ENCODE measurements at regions of chr2 and their contacts with region 1.

Region 1: DNA sequence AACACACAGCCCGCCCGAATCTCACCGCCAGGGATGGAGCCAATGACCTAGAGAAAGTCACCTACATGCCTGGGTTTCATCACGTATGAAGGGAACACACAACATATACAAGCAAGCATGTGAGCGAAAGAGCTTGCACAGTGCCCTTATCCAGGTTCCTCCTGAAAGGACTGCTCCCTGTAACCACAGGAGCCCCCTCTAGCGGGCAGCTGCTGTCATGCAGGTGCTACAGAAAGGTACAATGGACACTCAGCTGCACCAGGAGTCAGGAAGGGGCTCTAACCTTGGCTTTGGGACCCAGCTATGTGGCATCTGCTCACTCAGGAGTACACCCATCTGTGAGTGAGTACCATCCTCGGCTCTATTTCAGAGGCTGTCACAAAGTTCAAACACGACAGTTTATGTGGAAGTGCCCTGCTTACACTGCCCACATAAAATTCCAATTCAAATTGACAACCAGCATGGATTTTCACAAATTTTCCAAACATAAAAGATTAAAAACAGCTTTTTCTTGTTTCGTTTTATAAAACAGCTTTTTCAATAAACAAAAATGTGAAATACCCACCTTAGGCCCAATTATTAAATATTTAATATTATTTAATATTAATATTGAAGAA is 3.5 kb downstream of the NDUFA10 start:
- DNase-seq: peak; percentile 85
- H3K4me3 ChIP-seq: no peak overlapping the region; a peak in 1 of 4 replicates
- H3K27ac ChIP-seq: no peak overlapping the region
- H3K4me1 ChIP-seq: peaks cover 6 to 10% of the 10 kb centered on the region in 2 experiments; a peak in 3 of 4 replicates
- H3K27me3 ChIP-seq: no peaks in the 10 kb centered on the region
- CTCF ChIP-seq: peak; percentile 83
- EP300 ChIP-seq: no peak
- RAD21 ChIP-seq: peak; percentile 57

Region 2: GRCh38 chr2:239482778-239483712 is 538.6 kb before region 1 on chr2:
- CTCF ChIA-PET with region 1: no interaction called
- POLR2A ChIA-PET with region 1: no interaction called
- DNase-seq: no peak
- H3K4me3 ChIP-seq: no peak overlapping the region
- H3K27ac ChIP-seq: no peak overlapping the region
- H3K4me1 ChIP-seq: no peaks in the 10 kb centered on the region; a peak in 1 of 4 replicates
- H3K27me3 ChIP-seq: no peaks in the 10 kb centered on the region
- CTCF ChIP-seq: no peak
- EP300 ChIP-seq: no peak
- RAD21 ChIP-seq: no peak

Region 3: DNA sequence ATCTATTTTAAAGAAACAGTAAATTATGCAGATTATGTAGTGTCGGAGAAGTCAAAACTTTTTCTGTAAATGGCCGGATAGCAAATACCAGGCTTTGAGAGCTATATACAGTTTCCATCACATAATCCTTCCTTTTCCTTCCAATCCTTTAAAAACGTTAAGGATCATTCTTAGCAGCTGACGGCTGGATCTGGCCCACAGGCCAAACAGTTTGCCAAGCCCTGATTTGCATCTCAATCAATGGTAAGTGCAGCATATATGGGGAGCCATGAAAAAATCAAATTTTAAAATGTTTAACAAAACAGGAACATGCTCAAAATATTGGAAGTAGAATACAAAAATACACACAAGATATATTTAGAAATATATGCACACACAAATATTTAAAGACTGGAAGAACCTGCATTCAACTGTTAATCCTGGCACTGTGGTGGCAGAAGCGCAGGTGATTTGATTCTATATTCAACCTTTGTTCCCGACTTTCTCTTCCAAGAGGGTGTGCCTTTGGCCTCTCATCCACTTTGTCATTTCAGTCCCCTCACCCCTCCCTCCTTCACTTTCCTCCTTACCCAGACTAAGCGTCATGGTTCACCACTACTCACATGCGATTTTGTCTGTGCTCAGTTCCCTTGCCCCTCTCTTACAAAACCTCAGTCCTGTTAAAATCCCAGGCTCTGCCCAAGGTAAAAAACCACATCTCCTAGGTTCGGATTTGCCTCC is 23.8 kb before region 1 on chr2:
- CTCF ChIA-PET with region 1: interaction called, 11 read pairs
- POLR2A ChIA-PET with region 1: no interaction called
- DNase-seq: no peak
- H3K4me3 ChIP-seq: no peak overlapping the region
- H3K27ac ChIP-seq: no peak overlapping the region; a peak in 1 of 4 replicates
- H3K4me1 ChIP-seq: no peaks in the 10 kb centered on the region
- H3K27me3 ChIP-seq: no peaks in the 10 kb centered on the region
- CTCF ChIP-seq: no peak
- EP300 ChIP-seq: no peak
- RAD21 ChIP-seq: no peak

Region 4: GRCh38 chr2:240032406-240033329 is 11.1 kb after region 1 on chr2:
- CTCF ChIA-PET with region 1: interaction called, 17 read pairs
- POLR2A ChIA-PET with region 1: no interaction called
- DNase-seq: no peak
- H3K4me3 ChIP-seq: peak overlapping the region; percentile 39 to 54
- H3K27ac ChIP-seq: no peak overlapping the region
- H3K4me1 ChIP-seq: no peaks in the 10 kb centered on the region; a peak in 1 of 4 replicates
- H3K27me3 ChIP-seq: peaks cover 20% of the 10 kb centered on the region
- CTCF ChIP-seq: no peak
- EP300 ChIP-seq: no peak
- RAD21 ChIP-seq: no peak